Transverse colon (tissue), 4 donors: ENCODE measurements at regions of chr1 and their contacts with region 1.

Region 1: DNA sequence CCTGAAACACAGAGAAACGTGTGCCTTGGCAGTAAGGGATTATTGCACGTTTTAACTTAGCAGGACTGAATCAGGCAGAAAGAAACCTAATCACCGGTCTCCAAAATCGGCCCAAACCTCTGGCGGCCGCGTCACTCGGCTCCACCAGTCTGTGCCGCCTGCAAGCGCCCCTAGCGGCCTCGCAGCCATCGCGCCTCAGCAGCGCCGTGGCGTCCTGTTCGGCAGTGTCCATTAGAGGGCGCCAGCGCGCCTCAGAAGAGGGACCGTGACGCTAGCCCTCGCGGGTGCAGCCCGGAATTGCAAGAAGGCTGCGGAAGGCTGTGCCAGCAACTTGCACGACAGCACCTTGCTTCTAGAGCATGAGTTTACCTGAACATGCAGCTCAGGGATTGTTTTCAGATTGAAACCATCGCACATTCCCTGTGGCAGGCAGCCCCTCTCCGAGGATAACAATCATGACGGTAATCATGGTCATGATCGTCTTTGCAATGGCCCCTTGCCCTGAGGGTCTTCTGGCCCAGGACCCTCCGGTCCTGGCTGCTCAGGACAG is 164.4 kb downstream of the TRIM33 start:
- DNase-seq: peak; percentile 97
- H3K4me3 ChIP-seq: peak overlapping the region; percentile 18 to 50 (median 35)
- H3K27ac ChIP-seq: peak overlapping the region; percentile 56 to 78 (median 72)
- H3K4me1 ChIP-seq: peaks cover 6 to 12% (median 10%) of the 10 kb centered on the region in 4 donors
- H3K27me3 ChIP-seq: no peaks in the 10 kb centered on the region
- CTCF ChIP-seq: peak; percentile 100
- EP300 ChIP-seq: no peak
- POLR2A ChIP-seq: no peak

Region 2: GRCh38 chr1:113616156-113616555 is 730.4 kb before region 1 on chr1:
- in situ Hi-C with region 1: no loop called
- intact Hi-C with region 1: no loop called
- DNase-seq: no peak
- H3K4me3 ChIP-seq: no peak overlapping the region
- H3K27ac ChIP-seq: no peak overlapping the region
- H3K4me1 ChIP-seq: no peaks in the 10 kb centered on the region
- H3K27me3 ChIP-seq: no peaks in the 10 kb centered on the region
- CTCF ChIP-seq: no peak
- EP300 ChIP-seq: no peak
- POLR2A ChIP-seq: no peak

Region 3: DNA sequence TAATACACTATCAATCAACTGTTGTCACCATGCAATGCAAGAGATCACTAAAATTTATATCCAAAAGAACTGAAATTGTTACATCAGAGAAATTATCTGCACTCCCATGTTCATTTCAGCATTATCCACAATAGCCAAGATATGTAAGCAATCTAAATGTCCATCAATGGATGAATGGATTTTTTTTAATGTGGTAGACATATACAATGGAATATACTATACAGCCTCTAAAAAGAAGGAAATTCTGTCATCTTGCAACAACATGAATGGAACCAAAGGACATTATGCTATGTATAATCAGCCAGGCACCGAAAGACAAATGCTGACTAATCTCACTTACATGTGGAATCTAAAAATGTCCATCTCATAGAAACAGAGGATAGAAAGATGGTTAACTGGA is 74.3 kb after region 1 on chr1:
- in situ Hi-C with region 1: loop called in 1 of 4 experiments (anchors 10 kb)
- intact Hi-C with region 1: loop called (anchors 5 kb)
- DNase-seq: no peak
- H3K4me3 ChIP-seq: no peak overlapping the region
- H3K27ac ChIP-seq: no peak overlapping the region
- H3K4me1 ChIP-seq: no peaks in the 10 kb centered on the region
- H3K27me3 ChIP-seq: no peaks in the 10 kb centered on the region
- CTCF ChIP-seq: no peak
- EP300 ChIP-seq: no peak
- POLR2A ChIP-seq: no peak

Region 4: DNA sequence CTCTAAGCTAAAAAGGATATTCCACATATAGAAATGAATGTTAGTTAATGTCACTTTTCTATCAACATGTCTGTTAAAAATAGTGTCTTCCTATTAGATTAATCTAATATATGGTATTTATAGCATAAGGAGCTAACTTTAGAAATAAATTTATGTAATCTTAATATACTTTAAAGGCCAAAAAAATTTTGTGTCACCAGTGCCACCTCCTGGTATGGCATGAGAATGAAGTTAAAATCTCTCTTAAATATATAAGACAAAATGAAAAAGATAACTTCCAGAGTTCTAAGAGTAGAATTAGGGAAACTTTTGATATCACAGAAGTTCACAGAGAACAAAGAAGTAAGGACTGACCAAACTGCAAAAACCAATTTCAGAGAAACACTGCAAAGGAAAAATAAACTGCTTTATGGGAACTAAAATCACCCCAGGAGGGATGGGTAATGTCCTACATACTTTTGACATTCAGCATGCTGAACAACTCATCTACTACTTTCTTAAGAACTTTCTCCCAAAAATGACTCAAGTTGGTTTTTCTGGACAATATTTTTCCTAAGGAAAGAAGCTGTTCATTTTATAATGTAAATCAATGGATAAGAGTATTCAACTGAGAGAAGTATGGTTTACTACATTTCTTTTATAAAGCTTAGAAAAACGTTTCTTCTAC is 81.7 kb after region 1 on chr1:
- in situ Hi-C with region 1: loop called in 1 of 4 experiments (anchors 10 kb)
- intact Hi-C with region 1: loop called (anchors 5 kb)
- DNase-seq: no peak
- H3K4me3 ChIP-seq: no peak overlapping the region
- H3K27ac ChIP-seq: no peak overlapping the region
- H3K4me1 ChIP-seq: no peaks in the 10 kb centered on the region
- H3K27me3 ChIP-seq: no peaks in the 10 kb centered on the region
- CTCF ChIP-seq: peak in 4 of 5 experiments; percentile 22 to 37 (median 33)
- EP300 ChIP-seq: no peak
- POLR2A ChIP-seq: no peak

Region 5: GRCh38 chr1:114495486-114495885 is 148.9 kb after region 1 on chr1:
- in situ Hi-C with region 1: no loop called
- intact Hi-C with region 1: no loop called
- DNase-seq: no peak
- H3K4me3 ChIP-seq: no peak overlapping the region
- H3K27ac ChIP-seq: no peak overlapping the region
- H3K4me1 ChIP-seq: peaks cover 0 to 26% (median 10%) of the 10 kb centered on the region in 4 donors
- H3K27me3 ChIP-seq: no peaks in the 10 kb centered on the region
- CTCF ChIP-seq: no peak
- EP300 ChIP-seq: no peak
- POLR2A ChIP-seq: no peak